ENCODE measurements at regions of chr1 and their contacts with region 1.

Region 1: DNA sequence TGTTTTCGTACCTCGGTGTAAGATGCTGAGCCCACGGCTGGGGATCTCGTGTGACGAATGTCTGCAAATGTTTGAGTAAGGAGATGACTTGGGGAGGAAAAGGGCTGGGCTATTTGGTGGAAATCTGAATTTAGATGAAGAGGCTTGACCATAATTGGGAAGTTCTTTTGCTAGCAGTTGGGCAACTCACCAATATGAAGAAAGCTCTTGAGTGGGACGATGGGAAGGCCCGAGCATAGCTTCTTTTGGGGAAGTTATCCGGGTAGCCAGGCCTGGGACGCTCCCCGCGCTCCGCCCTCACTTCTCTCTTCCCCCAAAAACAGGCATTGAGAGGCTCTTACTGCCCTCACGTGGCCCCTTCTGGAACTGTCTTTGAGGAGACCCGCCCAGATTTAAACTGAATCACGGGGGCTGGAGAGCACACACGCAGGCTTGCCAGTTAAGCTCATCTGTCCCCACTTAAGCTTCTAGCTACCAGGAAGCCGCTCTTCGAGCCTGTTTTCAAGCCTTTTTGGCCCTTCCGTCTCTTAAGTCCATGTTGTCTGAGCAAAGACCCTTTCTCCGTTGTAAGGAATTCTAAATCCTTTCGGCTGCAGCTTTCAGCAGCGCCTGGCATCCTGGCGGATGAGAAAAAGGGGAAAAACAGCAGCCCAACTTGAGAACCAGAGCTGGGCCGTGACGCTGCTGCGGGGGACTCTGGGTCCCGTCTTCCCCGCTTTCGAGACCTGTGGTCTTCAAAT is 93.1 kb downstream of the NID1 start:
- DNase-seq: peak; percentile 86 to 94
- ATAC-seq: peak; percentile 93 to 98 (median 96)
- H3K4me3 ChIP-seq: peak overlapping the region in 9 of 10 donors; percentile 24 to 54 (median 48)
- H3K27ac ChIP-seq: peak overlapping the region; percentile 71 to 94 (median 88)
- H3K4me1 ChIP-seq: peaks cover 0 to 23% (median 17%) of the 10 kb centered on the region in 9 donors
- H3K27me3 ChIP-seq: no peaks in the 10 kb centered on the region
- CTCF ChIP-seq: peak; percentile 74 to 92 (median 89)

Region 2: DNA sequence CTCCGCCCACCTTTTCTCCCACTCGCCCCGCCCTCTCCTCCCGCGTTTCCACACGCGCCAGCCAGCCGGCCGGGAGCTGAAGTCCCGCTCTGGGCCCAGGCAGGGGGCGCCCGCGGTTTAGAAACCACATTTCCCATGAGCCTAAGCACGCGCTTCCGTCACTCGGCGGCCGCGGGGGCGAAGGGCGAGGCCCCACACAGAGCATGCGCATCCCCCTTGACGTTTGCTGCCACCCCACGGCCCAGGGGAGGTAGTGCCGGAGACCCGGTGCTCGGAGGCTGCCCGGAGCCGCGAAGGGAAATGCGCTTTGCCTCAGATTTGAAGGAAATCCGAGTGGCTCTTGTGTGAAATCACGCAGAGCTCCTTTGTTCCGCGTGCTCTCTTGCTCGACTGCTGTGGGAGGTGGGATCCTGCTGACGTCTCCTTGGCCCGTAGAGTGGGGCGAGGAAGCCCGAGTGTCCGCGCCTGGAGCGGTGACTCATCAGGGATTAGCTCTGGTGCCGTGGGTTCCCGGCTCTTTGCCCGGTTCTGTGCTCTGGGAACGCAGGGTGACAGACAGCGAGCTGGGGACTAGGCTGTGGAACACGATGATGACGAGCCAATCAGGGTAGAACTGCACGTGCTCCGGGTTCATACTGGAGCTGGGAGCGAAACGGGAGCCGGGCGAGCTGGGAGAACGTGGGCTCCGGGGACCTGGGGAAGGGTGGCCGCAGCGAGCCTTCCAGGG is 467.1 kb before region 1 on chr1:
- intact Hi-C with region 1: loop called in 2 of 10 experiments (anchors 5 to 10 kb)
- DNase-seq: peak; percentile 99 to 100
- ATAC-seq: peak; percentile 93 to 97 (median 96)
- H3K4me3 ChIP-seq: peak overlapping the region; percentile 54 to 95 (median 68)
- H3K27ac ChIP-seq: peak overlapping the region; percentile 91 to 99 (median 96)
- H3K4me1 ChIP-seq: peaks cover 0 to 36% (median 26%) of the 10 kb centered on the region in 9 donors
- H3K27me3 ChIP-seq: no peaks in the 10 kb centered on the region
- CTCF ChIP-seq: peak; percentile 75 to 98 (median 95)

Region 3: DNA sequence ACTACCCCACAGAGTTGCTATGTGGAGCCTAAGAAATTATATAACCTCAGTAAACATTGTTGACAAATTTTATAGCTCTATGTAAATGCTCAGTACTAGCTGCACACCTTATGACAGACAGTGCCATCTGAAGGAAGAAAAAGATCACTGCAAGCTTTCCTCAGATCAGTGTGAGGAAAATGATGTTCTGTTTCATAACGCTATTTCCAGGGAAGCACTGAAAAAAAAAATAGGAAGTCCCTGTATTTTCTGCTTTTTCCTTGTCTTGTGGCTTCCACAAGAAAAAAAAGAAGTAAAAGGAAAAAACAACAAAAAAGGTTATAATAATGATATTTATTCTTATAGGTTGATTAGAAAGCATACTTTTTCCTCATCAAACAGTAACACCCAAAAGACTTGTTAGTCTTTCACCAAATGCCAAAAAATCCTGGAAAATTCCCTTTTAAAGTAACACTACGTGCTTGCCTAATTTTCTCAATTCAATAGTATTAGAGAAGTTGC is 128.2 kb before region 1 on chr1:
- intact Hi-C with region 1: loop called in 1 of 10 experiments (anchors 5 kb)
- DNase-seq: no peak
- ATAC-seq: peak; percentile 45 to 76 (median 66)
- H3K4me3 ChIP-seq: no peak overlapping the region
- H3K27ac ChIP-seq: peak overlapping the region in 1 of 10 donors; percentile 52
- H3K4me1 ChIP-seq: peaks cover 12 to 51% (median 40%) of the 10 kb centered on the region in 9 donors
- H3K27me3 ChIP-seq: no peaks in the 10 kb centered on the region
- CTCF ChIP-seq: peak in 7 of 9 donors; percentile 43 to 69 (median 60)

Region 4: GRCh38 chr1:235883261-235883927 is 88.3 kb before region 1 on chr1:
- intact Hi-C with region 1: loop called in 2 of 10 experiments (anchors 10 kb)
- DNase-seq: peak; percentile 79 to 89
- ATAC-seq: peak; percentile 85 to 96 (median 91)
- H3K4me3 ChIP-seq: peak overlapping the region in 6 of 10 donors; percentile 3 to 30 (median 24)
- H3K27ac ChIP-seq: peak overlapping the region in 9 of 10 donors; percentile 35 to 75 (median 67)
- H3K4me1 ChIP-seq: peaks cover 0 to 61% (median 23%) of the 10 kb centered on the region in 9 donors
- H3K27me3 ChIP-seq: no peaks in the 10 kb centered on the region
- CTCF ChIP-seq: no peak

Region 5: GRCh38 chr1:235946571-235946981 is 25.2 kb before region 1 on chr1:
- intact Hi-C with region 1: no loop called
- DNase-seq: no peak
- ATAC-seq: peak in 6 of 8 donors; percentile 35 to 62 (median 44)
- H3K4me3 ChIP-seq: no peak overlapping the region
- H3K27ac ChIP-seq: peak overlapping the region in 1 of 10 donors; percentile 70
- H3K4me1 ChIP-seq: peaks cover 0 to 64% (median 0%) of the 10 kb centered on the region in 9 donors
- H3K27me3 ChIP-seq: no peaks in the 10 kb centered on the region
- CTCF ChIP-seq: peak in 6 of 9 donors; percentile 23 to 46 (median 28)

Region 6: DNA sequence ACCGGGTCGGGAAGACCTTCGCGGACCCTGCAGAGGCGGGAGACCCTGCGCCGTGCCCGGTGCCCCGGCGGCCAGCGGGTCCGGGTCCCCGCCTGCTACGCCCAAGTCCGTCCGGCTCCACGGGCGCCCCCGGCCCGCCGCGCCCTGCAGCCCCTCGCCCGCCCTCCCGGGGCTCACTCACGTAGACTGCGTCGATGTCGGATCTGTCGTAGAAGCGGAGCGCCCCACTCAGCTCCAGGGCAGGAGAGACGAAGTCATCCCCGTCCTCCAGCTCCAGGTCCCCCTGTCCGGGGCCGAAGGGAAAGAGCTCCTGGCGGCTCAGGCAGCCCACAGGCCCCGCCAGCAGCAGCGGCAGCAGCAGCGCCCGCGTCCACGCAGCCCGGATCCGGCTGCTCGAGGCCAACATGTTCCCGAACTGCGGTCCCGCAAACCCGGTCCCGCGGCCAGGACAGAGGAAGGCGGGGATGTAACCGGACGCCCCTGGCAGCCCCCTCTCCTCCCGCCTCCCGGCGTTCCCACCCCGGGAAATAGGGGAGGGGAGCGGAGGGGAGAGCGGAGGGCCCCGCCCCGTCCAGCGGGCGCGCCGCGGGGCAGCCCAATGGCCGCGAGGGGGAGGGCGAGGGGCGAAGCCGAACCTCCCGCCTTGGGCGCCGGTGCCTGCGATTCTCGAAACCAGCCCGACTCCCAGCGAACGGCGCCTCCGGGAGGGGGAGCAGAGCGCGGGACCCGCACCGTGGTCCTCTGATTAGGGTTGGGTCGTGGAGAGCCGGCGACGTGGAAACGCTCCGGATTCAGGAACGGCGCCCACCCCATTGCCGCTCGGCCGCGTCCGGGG is 93.2 kb after region 1 on chr1 and contains the start of gene NID1:
- intact Hi-C with region 1: loop called in 1 of 10 experiments (anchors 5 kb)
- DNase-seq: peak; percentile 89 to 90
- ATAC-seq: peak; percentile 81 to 92 (median 86)
- H3K4me3 ChIP-seq: peak within 1 kb of the TSS; percentile 61 to 98 (median 88)
- H3K27ac ChIP-seq: peak within 1 kb of the TSS; percentile 89 to 100 (median 98)
- H3K4me1 ChIP-seq: peaks cover 4 to 75% (median 55%) of the 10 kb centered on the region in 9 donors
- H3K27me3 ChIP-seq: peaks cover 0 to 33% (median 0%) of the 10 kb centered on the region in 7 donors
- CTCF ChIP-seq: peak; percentile 13 to 72 (median 54)
- total RNA-seq, gene NID1: 33.5 to 120 (median 44.4) TPM

Region 7: DNA sequence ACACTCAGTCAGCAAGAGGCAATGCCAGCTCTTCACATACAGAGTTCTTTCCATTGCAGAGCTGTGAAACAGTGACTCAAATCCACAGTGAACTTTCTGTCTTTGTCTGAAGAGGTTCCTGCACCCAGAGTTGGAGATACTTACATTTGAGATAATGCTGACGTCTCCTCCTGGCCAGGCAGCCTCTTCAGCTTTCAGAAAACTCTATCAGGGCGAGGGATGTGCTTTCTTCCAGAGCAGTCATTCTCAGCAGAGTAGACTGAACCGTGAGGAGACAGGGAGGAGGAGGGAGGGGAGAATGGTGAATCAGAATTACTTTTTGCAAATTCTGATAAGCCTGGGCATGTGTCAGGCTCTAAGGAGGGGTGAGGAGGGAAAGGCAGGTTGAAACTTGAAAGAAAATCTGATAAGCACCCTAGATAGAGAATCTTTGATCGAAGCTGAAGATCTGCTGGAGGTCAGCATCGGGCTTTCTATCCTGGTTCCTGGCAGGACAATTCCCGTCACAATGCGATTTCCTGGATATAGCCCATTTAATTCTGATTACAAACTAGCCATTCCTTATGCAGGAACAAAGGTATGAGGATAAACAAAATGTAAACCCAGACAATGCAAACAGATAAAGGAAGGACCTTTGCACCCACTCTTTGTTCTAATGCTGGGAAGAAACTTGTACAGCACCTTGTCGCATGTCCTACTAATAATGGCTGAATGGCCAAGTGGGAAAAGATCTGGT is 112.1 kb after region 1 on chr1:
- intact Hi-C with region 1: no loop called
- DNase-seq: no peak
- ATAC-seq: peak in 3 of 8 donors; percentile 28 to 56 (median 30)
- H3K4me3 ChIP-seq: no peak overlapping the region
- H3K27ac ChIP-seq: no peak overlapping the region
- H3K4me1 ChIP-seq: peaks cover 0 to 9% (median 0%) of the 10 kb centered on the region in 9 donors
- H3K27me3 ChIP-seq: no peaks in the 10 kb centered on the region
- CTCF ChIP-seq: no peak

Measured in heart right ventricle (tissue), 16 donors.